ENCODE measurements at regions of chr9 and their contacts with region 1.

Region 1: DNA sequence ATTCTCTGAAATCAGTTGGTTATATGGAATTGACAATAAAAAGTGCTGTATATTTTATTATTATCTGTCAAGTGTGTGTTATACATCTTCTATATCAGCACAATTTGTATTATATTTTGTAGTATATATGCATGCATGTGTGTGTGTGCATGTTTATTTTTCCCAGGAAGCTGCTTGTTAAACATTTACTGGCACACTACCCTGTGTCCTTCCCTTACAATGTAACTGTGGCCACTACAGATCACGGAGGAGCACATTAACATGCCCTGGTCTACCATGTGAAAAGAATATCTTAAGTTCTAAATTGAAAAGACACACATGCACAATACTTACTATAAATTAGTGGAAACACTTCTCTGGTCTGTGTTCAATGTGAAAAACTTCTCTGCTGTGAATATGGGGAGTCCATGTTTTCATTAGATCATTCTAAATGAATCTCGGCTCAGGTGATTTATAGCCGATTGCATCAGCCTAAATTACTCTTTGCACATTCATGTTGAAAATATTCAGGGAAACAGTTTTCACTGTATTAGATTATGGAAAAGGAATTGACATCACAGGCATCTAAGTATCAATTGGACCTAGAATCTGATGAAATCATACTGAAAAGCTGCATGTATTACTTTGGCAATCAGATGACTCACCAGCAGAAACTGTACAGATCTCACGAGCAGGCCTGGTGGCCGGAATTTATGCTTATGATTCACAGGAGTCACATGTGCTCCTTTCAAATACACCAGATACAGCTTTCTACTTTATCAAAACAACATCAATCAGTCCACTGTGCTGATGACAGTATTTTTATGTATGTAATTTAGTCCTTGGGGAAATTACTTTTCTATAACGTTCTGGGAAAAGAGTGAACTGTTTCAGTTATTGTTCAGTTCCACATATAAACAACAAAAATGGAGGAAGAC is 39.4 kb downstream of the LURAP1L start:
- DNase-seq: peak; percentile 87
- H3K4me3 ChIP-seq: peak overlapping the region in 2 of 4 donors; percentile 8 to 11
- H3K27ac ChIP-seq: peak overlapping the region; percentile 73 to 85 (median 79)
- H3K4me1 ChIP-seq: peaks cover 0 to 94% (median 82%) of the 10 kb centered on the region in 4 donors
- H3K27me3 ChIP-seq: no peaks in the 10 kb centered on the region
- CTCF ChIP-seq: peak in 3 of 4 experiments; percentile 47 to 81 (median 50)
- EP300 ChIP-seq: peak in 3 of 4 donors; percentile 39 to 66 (median 51)
- POLR2A ChIP-seq: no peak

Region 2: DNA sequence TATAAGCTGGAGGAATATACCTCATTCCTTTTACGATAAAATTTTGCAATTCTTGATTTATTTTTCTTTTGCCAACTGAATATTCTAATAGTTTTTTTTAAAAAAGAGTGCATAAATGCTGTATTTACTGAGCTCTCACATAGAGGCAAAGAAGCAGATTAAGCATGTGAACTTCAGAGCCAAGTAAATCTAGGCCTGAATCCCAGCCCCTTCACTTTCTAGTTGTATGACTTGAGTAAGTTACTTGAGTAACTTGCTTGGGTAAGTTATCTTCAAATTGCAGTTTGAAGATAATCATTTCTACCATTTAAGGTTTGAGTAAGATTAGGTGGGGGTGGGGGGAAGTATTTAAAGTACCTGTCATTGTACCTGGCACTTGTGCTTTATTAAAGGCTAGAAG is 17.6 kb before region 1 on chr9:
- intact Hi-C with region 1: loop called (anchors 2 kb)
- DNase-seq: no peak
- H3K4me3 ChIP-seq: no peak overlapping the region
- H3K27ac ChIP-seq: peak overlapping the region in 2 of 4 donors; percentile 51 to 93
- H3K4me1 ChIP-seq: peaks cover 0 to 88% (median 70%) of the 10 kb centered on the region in 4 donors
- H3K27me3 ChIP-seq: no peaks in the 10 kb centered on the region
- CTCF ChIP-seq: no peak
- EP300 ChIP-seq: no peak
- POLR2A ChIP-seq: no peak

Measured in sigmoid colon (tissue), 7 donors.